ENCODE measurements at regions of chr6 and their contacts with region 1.

Region 1: DNA sequence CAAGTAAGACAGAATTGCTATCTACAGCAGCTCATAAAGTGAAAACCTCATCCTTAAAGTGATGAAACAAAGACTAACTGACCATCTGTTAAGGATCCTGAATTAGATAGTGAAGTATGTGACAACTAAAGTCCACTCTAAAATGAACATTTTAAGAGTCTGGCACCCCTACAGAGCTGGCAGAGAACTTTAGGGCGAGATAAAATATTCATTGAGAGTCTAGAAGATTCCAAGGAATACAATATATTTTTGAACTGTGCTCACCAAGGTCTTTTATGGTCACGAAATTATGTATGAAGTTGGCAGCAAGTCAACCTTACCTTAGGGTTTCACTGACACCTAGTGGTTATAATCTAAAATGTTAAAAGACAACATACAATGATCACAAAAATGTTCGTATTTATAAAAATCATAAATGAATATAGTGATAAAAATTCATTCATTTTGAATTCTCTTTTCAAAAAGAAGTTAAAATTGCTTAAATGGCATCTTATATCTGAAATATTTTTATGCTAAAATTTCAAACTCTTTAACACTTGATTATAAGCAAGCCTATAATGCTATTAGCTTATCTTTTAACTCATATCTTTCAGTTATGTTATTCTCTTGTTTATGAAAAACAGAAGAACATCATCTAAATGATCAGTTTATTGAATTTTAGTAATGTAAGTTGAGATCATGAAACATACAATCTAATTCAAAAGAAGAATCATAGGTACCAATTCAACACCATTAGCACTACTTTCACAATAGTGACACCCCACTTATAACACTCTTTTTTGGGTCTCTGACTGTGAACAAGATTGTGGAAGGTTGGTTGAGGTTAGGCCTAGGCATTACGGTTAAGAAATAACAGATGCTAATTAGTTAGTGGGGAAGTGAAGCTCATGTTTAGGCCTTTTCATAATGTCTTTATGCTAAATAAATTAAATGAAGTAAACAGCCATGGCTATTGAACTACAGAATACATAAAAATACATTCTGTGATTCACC is 27.5 kb downstream of the RSPH3 start:
- DNase-seq: no peak
- H3K4me3 Mint-ChIP-seq: no peak overlapping the region
- H3K27ac Mint-ChIP-seq: no peak overlapping the region
- H3K4me1 Mint-ChIP-seq: no peaks in the 10 kb centered on the region
- H3K27me3 Mint-ChIP-seq: no peaks in the 10 kb centered on the region

Region 2: GRCh38 chr6:158213925-158214674 is 758.4 kb before region 1 on chr6:
- CTCF ChIA-PET with region 1: interaction called, 4 read pairs
- intact Hi-C with region 1: loop called (anchors 5 kb)
- DNase-seq: peak; percentile 68
- H3K4me3 Mint-ChIP-seq: no peak overlapping the region
- H3K27ac Mint-ChIP-seq: no peak overlapping the region
- H3K4me1 Mint-ChIP-seq: peaks cover 8% of the 10 kb centered on the region
- H3K27me3 Mint-ChIP-seq: no peaks in the 10 kb centered on the region

Region 3: GRCh38 chr6:158660333-158660754 is 312.2 kb before region 1 on chr6:
- CTCF ChIA-PET with region 1: interaction called, 3 read pairs
- intact Hi-C with region 1: loop called (anchors 1 kb)
- DNase-seq: peak; percentile 68
- H3K4me3 Mint-ChIP-seq: no peak overlapping the region
- H3K27ac Mint-ChIP-seq: no peak overlapping the region
- H3K4me1 Mint-ChIP-seq: peaks cover 69% of the 10 kb centered on the region
- H3K27me3 Mint-ChIP-seq: no peaks in the 10 kb centered on the region

Region 4: GRCh38 chr6:158704181-158704822 is 268.2 kb before region 1 on chr6:
- CTCF ChIA-PET with region 1: interaction called, 18 read pairs
- intact Hi-C with region 1: loop called (anchors 1 kb)
- DNase-seq: peak; percentile 80
- H3K4me3 Mint-ChIP-seq: peak overlapping the region; percentile 58
- H3K27ac Mint-ChIP-seq: no peak overlapping the region
- H3K4me1 Mint-ChIP-seq: peaks cover 15% of the 10 kb centered on the region
- H3K27me3 Mint-ChIP-seq: no peaks in the 10 kb centered on the region

Region 5: DNA sequence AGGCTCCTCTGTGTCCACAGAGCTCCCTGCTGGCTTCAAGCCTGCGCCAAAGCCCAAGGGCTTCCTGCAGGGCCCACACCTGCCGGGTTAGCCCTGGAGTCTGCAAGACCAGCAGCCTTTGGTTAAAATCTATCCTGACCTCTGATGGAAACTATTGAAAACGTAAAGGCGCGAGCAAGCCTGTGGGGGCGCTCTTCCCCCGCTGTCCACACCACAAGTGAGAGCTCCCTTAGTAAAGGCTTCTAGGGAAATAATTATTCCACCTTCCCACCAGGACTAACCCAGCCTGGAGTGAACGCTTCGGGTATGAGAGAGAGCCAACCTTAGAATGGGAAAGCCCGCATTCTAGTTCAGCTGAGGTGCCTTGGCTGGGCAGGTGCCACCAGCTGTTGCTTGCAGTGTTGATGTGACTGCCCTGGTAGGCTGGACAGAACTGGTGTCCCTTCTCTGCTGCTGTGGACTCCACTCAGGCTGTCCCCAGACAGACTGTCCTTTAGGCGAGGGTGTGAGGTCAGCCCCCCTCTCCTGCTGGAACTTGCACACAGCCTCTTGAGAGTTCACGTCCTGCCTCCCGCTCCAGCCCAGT is 254.0 kb before region 1 on chr6:
- CTCF ChIA-PET with region 1: interaction called, 4 read pairs
- intact Hi-C with region 1: loop called (anchors 1 kb)
- DNase-seq: no peak
- H3K4me3 Mint-ChIP-seq: no peak overlapping the region
- H3K27ac Mint-ChIP-seq: no peak overlapping the region
- H3K4me1 Mint-ChIP-seq: peaks cover 37% of the 10 kb centered on the region
- H3K27me3 Mint-ChIP-seq: no peaks in the 10 kb centered on the region

Region 6: DNA sequence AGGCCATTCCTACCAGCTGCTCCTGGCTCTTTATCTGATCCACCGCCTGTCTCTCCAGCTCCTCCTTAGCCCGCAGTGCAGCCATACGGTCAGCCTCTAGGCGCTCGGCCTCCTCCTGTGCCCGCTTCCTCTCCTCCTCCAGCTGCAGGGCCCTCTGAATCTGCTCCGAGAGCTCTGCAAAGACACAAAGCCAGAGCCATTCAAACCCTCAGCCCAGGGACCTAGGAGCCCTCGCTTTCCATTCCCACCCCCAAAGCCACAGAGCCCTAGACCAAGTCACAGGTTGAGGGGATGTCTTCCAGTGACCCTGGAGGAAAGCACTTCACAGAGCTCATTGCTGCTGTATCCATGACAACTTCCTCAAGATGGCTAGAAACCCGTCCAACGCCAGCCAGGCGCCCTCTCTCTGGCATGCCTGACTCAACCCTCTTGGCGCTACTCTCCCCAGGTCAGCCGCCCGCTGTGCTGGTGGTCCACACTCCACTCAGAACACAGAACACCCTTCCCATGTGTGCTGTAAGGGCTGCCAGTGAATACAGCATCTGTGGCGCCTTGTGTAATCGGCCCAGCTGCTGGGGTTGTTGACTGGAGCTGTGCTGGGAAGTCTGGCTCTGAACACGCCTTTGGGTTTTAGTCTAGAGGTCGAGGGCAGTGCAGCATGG is 202.6 kb before region 1 on chr6:
- CTCF ChIA-PET with region 1: interaction called, 11 read pairs
- intact Hi-C with region 1: no loop called
- DNase-seq: no peak
- H3K4me3 Mint-ChIP-seq: no peak overlapping the region
- H3K27ac Mint-ChIP-seq: peak overlapping the region; percentile 66
- H3K4me1 Mint-ChIP-seq: peaks cover 42% of the 10 kb centered on the region
- H3K27me3 Mint-ChIP-seq: no peaks in the 10 kb centered on the region

Region 7: GRCh38 chr6:158793432-158793831 is 179.1 kb before region 1 on chr6:
- CTCF ChIA-PET with region 1: interaction called, 5 read pairs
- intact Hi-C with region 1: loop called (anchors 2 kb)
- DNase-seq: peak; percentile 43
- H3K4me3 Mint-ChIP-seq: no peak overlapping the region
- H3K27ac Mint-ChIP-seq: peak overlapping the region; percentile 24
- H3K4me1 Mint-ChIP-seq: peaks cover 88% of the 10 kb centered on the region
- H3K27me3 Mint-ChIP-seq: no peaks in the 10 kb centered on the region

Measured in activated naive CD4-positive, alpha-beta T cell treated with anti-CD3 and anti-CD28 coated beads for 36 hours (primary cell).